MCF 10A (cell line): ENCODE measurements at regions of chr3 and their contacts with region 1.

Region 1: DNA sequence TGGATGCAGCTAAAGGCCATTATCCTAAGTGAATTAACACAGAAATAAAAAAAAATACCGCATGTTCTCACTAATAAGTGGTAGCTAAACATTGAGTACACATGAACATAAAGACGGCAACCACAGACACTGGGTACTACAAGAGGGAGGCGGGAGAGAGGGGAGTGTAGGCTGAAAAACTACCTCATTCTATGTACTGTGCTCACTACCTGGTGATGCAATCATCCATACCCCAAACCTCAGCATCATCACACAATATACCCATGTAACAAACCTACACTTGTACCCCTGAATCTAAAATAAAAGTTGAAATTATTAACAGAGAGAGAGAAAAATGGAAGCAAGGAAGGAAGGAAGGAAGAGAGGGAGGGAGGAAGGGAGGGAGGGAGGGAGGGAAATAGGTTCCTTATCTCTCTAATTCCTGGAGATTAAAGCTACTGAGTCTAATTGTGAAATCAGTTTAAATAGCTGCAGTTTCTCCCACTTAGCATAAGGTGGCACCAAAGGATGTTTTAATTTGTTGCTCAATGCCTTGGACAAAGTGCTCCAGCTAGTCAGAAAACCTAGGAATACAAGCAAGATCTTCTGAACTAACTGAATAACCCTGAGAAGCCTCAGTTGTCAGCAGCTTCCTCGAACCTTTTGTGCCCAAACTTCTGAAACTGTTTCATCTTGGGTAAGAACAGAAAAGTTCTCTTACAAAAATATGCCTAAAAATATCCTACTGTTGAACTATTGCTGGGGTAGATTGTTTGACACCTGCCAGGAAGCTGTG is 79.4 kb upstream of the ATP11B start:
- DNase-seq: peak; percentile 77
- H3K4me3 Mint-ChIP-seq: no peak overlapping the region
- H3K27ac Mint-ChIP-seq: no peak overlapping the region
- H3K4me1 Mint-ChIP-seq: no peaks in the 10 kb centered on the region
- H3K27me3 Mint-ChIP-seq: no peaks in the 10 kb centered on the region
- CTCF ChIP-seq: peak; percentile 68

Region 2: DNA sequence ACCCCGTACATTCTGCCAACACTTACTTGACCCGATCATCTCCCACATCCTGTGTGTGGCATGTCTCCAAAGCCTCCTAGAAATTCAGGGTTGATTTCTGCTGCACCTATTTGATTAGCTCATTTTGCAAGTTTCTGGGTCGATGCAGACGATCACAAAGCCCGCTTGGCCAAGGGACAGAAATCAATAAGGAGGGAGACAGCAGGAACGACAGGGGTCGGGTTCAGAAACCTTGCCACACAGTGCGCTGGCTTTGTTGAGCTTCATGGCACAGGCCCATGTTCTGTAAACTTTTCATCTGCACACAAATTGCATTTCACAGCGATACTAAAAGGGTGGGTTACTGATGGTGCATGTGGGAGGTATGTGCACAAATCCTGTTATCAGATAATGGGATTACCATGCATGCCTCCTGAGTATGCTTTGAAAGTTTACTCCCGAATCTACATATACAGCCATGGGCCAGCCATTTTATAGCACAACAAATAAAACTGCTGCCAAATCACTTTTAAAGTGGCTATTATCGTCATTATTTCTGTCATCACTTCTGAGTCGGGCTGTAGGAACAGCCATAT is 16.5 kb before region 1 on chr3:
- CTCF ChIA-PET with region 1: interaction called, 25 read pairs
- POLR2A ChIA-PET with region 1: interaction called, 3 read pairs
- intact Hi-C with region 1: no loop called
- DNase-seq: no peak
- H3K4me3 Mint-ChIP-seq: no peak overlapping the region
- H3K27ac Mint-ChIP-seq: no peak overlapping the region
- H3K4me1 Mint-ChIP-seq: no peaks in the 10 kb centered on the region
- H3K27me3 Mint-ChIP-seq: no peaks in the 10 kb centered on the region
- CTCF ChIP-seq: no peak

Region 3: GRCh38 chr3:182837855-182838454 is 124.0 kb after region 1 on chr3:
- CTCF ChIA-PET with region 1: interaction called, 28 read pairs
- POLR2A ChIA-PET with region 1: no interaction called
- intact Hi-C with region 1: loop called (anchors 1 kb)
- DNase-seq: peak; percentile 27
- H3K4me3 Mint-ChIP-seq: no peak overlapping the region
- H3K27ac Mint-ChIP-seq: no peak overlapping the region
- H3K4me1 Mint-ChIP-seq: no peaks in the 10 kb centered on the region
- H3K27me3 Mint-ChIP-seq: no peaks in the 10 kb centered on the region
- CTCF ChIP-seq: peak; percentile 54

Region 4: DNA sequence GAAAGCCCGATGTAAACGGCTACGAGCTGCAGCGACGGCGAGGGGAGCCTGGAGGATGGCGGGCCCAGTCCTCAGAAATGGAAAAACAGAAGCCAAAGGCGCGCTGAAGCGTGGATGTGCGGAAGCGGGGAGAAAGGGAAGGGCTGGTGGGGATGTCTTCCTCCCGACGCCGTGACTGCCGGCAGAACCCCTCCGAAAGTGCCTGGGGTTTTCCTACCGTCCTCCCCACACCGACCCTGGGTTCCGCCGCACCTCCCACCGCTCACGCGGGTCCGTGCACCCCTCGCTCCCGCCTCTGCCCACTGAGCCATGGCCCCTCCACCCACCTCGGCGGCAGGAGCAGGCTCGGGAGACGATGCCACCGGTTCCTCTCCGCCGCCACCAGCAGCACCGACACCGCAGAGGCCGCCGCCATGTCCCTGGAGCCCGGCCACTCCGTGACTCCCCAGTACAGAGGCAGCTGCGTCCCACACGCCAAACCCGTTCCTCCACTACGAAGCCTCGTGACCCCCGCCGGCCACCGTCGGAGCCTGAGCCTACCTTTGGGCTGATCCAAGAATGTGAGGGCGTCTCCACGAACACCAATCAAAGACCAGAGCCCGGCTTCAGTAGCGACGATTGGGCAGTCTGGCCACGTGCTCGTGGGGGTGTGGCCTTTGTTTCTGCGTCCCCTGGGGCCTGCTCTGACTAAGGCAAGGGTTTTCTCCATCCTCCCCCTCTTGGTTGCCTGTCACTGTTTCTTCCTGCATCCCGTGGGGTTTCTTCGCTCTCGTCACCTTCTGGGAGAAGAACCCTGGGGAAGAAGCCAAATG is 385.3 kb after region 1 on chr3 and contains the start of gene MCCC1:
- CTCF ChIA-PET with region 1: no interaction called
- POLR2A ChIA-PET with region 1: no interaction called
- intact Hi-C with region 1: loop called (anchors 10 kb)
- DNase-seq: peak; percentile 99
- H3K4me3 Mint-ChIP-seq: peak within 1 kb of the TSS; percentile 91
- H3K27ac Mint-ChIP-seq: peak within 1 kb of the TSS; percentile 93
- H3K4me1 Mint-ChIP-seq: peaks cover 17% of the 10 kb centered on the region
- H3K27me3 Mint-ChIP-seq: no peaks in the 10 kb centered on the region
- CTCF ChIP-seq: no peak
- total RNA-seq, gene MCCC1: 38.8 and 40.5 TPM in 2 replicates